Activated T-helper 1 cell treated with anti-CD3 and anti-CD28 coated beads, Interleukin-12 subunit alpha, Interleukin-12 subunit beta, Interleukin-2, Interleukin-4 antibody, amounts not matched to agents 30 ng/mL and 10 ng/mL and 1 ng/mL, durations not matched to agents 14 hours and 24 hours and 36 hours (primary cell): ENCODE measurements at regions of chr5 and their contacts with region 1.

Region 1: DNA sequence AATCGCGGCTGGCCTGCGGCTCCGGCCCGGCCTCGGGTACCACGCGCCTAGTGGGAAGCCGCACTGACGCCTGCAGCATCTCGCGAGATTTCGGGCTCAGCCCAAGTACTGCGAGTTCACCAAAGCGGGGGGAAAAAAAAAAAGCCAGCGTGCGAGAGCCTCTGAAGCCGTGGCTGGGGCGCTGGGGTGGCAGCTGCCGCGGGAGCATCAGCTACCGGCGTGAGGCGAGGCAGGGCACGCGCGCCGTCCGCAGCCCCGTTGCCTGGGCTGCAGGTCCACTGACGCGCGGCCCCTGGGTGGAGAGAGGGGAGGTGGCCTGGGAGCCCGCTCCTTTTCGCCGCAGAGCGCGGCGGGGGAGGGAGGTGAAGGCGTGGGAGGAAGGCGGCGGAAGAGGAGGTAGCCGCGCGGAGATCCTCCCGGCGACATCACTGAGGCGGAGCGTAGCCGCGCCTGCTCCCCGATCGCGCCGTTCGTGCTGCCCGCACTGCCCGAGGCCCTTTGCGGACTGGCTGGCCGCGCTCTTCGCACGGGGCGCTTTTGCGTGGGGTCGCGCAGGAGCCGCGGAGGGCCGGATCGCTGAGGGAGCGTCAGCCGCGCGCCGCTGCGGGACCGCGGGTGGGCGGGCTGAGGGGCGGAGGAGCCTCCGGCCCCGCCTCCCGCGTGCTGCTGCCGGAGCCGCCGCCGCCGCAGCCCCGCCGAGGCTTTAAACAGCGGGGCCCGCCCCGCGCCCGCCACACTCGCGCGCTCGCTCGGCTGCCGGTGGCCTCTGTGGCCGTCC is at the start of gene SLC12A2:
- DNase-seq: peak; percentile 87
- H3K4me3 Mint-ChIP-seq: peak within 1 kb of the TSS; percentile 93
- H3K27ac Mint-ChIP-seq: peak within 1 kb of the TSS; percentile 96
- H3K4me1 Mint-ChIP-seq: peaks cover 70% of the 10 kb centered on the region
- H3K27me3 Mint-ChIP-seq: no peaks in the 10 kb centered on the region
- total RNA-seq, gene SLC12A2: 23.9 and 24.8 TPM in 2 replicates

Region 2: GRCh38 chr5:127517480-127518318 is 565.5 kb before region 1 on chr5 and contains the start of gene PRRC1:
- intact Hi-C with region 1: loop called (anchors 1 kb)
- DNase-seq: peak; percentile 73
- H3K4me3 Mint-ChIP-seq: peak within 1 kb of the TSS; percentile 84
- H3K27ac Mint-ChIP-seq: peak within 1 kb of the TSS; percentile 59
- H3K4me1 Mint-ChIP-seq: peaks cover 26% of the 10 kb centered on the region
- H3K27me3 Mint-ChIP-seq: peaks cover 7% of the 10 kb centered on the region
- total RNA-seq, gene PRRC1: 52.9 and 59.7 TPM in 2 replicates

Region 3: DNA sequence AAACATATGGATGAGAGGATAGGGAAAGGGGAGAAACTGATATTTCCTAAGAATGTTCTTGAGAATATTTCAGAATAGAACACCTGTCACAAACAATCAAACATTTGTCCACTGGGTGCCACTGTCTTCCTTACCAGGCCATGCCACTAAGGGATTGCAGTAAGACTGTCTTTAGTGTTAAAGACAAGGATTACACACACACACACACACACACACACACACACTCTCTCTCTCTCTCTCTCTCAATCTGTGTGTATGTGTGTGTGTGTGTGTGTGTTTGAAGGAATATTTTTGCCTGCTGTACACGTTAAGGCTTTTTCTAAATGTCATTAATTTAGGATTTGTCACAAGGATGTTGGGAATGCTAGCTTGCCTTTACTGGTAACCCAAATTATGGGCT is 325.6 kb before region 1 on chr5:
- intact Hi-C with region 1: loop called (anchors 5 kb)
- DNase-seq: no peak
- H3K4me3 Mint-ChIP-seq: no peak overlapping the region
- H3K27ac Mint-ChIP-seq: no peak overlapping the region
- H3K4me1 Mint-ChIP-seq: no peaks in the 10 kb centered on the region
- H3K27me3 Mint-ChIP-seq: peaks cover 3% of the 10 kb centered on the region

Region 4: DNA sequence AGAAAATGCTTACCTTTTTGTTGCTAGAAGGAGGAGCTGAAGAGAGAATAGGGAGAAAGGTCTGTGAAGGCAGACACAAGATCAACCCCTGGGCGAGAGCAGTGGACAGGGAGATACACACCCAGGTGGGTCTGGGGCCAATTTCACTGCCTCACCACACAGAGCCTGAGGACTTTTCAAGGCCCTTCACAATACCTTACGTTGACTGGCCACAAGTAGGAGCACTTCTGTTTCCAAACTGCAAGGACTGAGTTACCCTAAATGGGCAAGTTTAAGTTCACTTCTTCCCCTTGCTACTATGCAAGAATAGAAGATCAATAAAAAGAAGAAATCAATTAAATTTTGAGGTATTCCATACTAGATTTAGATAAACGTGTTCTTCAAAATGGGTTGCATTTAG is 174.1 kb before region 1 on chr5:
- intact Hi-C with region 1: loop called (anchors 2 kb)
- DNase-seq: no peak
- H3K4me3 Mint-ChIP-seq: no peak overlapping the region
- H3K27ac Mint-ChIP-seq: no peak overlapping the region
- H3K4me1 Mint-ChIP-seq: peaks cover 10% of the 10 kb centered on the region
- H3K27me3 Mint-ChIP-seq: peaks cover 13% of the 10 kb centered on the region

Region 5: GRCh38 chr5:128174951-128175350 is 91.7 kb after region 1 on chr5:
- intact Hi-C with region 1: loop called (anchors 5 kb)
- DNase-seq: no peak
- H3K4me3 Mint-ChIP-seq: no peak overlapping the region
- H3K27ac Mint-ChIP-seq: no peak overlapping the region
- H3K4me1 Mint-ChIP-seq: no peaks in the 10 kb centered on the region
- H3K27me3 Mint-ChIP-seq: no peaks in the 10 kb centered on the region

Region 6: GRCh38 chr5:129094087-129094923 is 1011.1 kb after region 1 on chr5 and contains the start of gene ISOC1:
- intact Hi-C with region 1: loop called (anchors 1 kb)
- DNase-seq: peak; percentile 91
- H3K4me3 Mint-ChIP-seq: peak within 1 kb of the TSS; percentile 86
- H3K27ac Mint-ChIP-seq: peak within 1 kb of the TSS; percentile 81
- H3K4me1 Mint-ChIP-seq: peaks cover 40% of the 10 kb centered on the region
- H3K27me3 Mint-ChIP-seq: peaks cover 12% of the 10 kb centered on the region
- total RNA-seq, gene ISOC1: 32.4 TPM in 2 replicates